Activated B cell treated with CpG ODN at 0.5 μM for 24 hours (primary cell): ENCODE measurements at regions of chr12 and their contacts with region 1.

Region 1: DNA sequence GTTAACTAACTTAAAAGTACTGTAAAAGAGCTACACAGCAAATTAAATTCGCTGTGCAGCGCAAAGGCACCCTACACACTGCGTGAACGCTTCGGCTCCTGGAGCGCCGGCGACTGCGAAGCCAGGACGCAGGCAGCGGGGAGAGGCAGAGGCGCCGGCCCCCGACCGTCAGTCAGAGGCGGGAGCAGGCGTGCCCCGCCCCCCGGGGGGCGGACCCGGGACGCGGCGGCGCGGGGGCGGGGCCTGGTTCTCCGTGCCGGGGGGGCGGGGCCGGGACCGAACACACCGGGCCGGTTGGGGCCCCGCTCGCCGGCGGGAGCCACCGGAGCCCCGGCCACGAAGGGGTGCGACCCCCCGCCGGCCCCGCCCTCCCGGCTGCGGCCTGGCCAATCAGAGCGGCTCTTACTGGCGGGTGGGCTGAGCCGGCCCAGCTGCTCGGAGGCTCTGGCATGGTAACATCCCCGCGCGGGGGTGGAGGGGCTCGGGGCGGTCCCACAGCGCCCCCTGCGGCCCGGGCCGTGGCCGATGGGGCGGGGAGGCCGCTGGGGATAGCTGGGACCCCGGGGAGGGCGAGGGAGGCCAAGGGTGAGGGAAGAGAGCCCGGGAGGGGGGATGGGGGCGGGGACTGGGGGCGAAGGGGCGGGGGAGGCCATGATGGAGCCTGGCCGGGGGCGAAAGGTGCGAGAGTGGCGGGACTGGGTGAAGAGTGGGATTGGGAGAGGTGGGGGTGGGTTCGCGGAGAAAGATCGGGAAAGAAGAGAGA is at the start of gene PRPF40B:
- DNase-seq: peak; percentile 89
- ATAC-seq: peak; percentile 79
- H3K4me3 Mint-ChIP-seq: peak within 1 kb of the TSS; percentile 88
- H3K27ac Mint-ChIP-seq: peak within 1 kb of the TSS; percentile 86
- H3K4me1 Mint-ChIP-seq: peaks cover 25% of the 10 kb centered on the region
- H3K27me3 Mint-ChIP-seq: no peaks in the 10 kb centered on the region
- CTCF ChIP-seq: no peak
- total RNA-seq, gene PRPF40B: 16.4 and 23.4 TPM in 2 replicates

Region 2: GRCh38 chr12:49342066-49342913 is 281.0 kb before region 1 on chr12:
- CTCF ChIA-PET with region 1: no interaction called
- POLR2A ChIA-PET with region 1: no interaction called
- intact Hi-C with region 1: loop called (anchors 5 kb)
- DNase-seq: peak; percentile 71
- ATAC-seq: peak; percentile 75
- H3K4me3 Mint-ChIP-seq: peak overlapping the region; percentile 67
- H3K27ac Mint-ChIP-seq: no peak overlapping the region
- H3K4me1 Mint-ChIP-seq: peaks cover 53% of the 10 kb centered on the region
- H3K27me3 Mint-ChIP-seq: peaks cover 39% of the 10 kb centered on the region
- CTCF ChIP-seq: peak; percentile 24

Region 3: GRCh38 chr12:49553512-49554088 is 69.7 kb before region 1 on chr12:
- CTCF ChIA-PET with region 1: interaction called, 3 read pairs
- POLR2A ChIA-PET with region 1: no interaction called
- intact Hi-C with region 1: loop called (anchors 1 kb)
- DNase-seq: no peak
- ATAC-seq: peak; percentile 65
- H3K4me3 Mint-ChIP-seq: no peak overlapping the region
- H3K27ac Mint-ChIP-seq: no peak overlapping the region
- H3K4me1 Mint-ChIP-seq: peaks cover 4% of the 10 kb centered on the region
- H3K27me3 Mint-ChIP-seq: peaks cover 13% of the 10 kb centered on the region
- CTCF ChIP-seq: no peak

Region 4: DNA sequence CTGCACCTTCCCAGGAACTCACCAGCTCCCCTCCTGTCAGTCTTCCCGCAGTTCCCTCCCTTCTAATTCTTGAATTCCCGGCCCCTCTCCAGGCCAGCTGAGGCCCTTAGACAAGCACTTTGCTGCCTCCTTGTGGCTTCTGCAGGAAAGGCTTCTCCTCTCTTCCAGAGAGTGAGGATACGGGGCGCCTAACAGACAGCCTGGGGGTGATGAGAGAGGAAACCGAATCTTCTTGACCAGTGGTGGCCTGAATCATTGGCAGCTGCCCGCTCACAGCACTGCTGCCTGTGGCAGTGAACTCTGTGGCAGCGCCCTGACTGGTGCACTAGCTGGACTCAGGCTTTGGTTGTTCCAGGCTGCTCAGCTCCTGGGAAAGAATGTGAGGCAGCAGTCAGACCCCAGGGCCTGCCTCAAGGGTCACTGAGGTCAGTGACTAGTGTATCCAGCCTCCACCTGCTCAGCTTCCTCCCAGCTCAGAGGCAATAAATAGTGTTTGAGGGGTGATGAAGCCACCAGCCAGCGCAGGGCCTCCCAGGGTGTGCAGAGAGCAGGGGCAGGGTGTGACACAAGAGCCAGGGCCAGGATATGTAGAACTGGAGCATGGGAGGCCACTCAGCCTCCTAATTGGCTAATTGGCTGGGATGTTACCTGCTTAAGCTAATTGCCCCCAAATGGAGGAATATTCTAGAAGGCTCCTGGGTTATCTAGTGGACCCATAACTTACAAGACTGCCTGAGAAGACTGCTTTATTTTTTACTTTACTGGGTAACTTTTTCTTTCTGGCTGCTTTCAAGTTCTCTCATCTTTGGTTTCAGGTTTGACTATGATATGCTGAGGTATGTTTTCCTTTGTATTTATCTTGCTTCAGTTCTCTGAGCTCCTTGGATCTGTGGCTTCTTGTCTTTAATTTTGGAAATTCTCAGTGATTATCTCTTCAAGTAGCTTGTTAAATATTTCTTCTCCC is 42.5 kb before region 1 on chr12:
- CTCF ChIA-PET with region 1: interaction called, 3 read pairs
- POLR2A ChIA-PET with region 1: interaction called, 3 read pairs
- intact Hi-C with region 1: loop called (anchors 5 kb)
- DNase-seq: no peak
- ATAC-seq: peak; percentile 62
- H3K4me3 Mint-ChIP-seq: no peak overlapping the region
- H3K27ac Mint-ChIP-seq: no peak overlapping the region
- H3K4me1 Mint-ChIP-seq: peaks cover 11% of the 10 kb centered on the region
- H3K27me3 Mint-ChIP-seq: no peaks in the 10 kb centered on the region
- CTCF ChIP-seq: no peak

Region 5: DNA sequence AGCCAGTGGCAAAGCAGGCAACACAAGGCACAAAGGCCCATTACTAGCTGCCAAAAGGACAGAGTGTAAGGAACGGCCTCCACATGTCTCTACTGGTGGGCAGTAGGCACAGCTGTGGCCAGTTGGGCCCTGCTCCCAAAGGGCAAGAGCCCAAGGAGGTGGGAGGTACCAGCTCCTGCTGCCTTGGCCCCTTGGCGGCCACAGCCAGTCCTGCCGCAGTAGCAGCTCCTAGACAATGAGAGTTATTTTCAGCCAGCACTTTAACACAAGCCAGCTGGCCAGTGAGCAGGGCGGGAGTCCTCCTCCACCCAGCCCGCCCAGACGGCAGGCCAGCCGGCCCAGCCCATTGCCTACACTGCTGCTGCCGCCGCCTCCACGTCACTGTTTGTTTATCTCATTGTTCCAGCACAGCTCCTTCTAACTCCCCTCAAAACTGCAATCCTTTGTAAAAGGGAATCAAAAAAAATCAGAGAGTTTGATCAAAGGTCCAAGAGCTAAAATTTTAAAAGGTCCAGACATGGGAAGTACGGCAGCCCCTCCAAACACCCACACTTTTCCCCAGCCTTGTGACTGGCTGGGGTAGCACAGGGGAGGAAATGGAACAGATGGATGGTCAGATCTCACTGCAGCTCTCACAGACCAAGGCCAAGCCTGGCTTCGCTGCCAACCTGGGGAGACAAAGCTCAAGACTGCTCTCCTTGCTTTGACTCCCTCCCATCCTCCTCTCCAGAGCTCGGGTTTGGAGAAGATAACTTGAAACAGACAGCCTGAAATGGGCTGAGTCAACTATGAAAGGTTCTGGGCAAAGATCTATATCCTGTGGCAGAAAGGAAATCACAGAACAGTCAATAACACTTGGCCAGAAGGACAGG is 50.4 kb after region 1 on chr12:
- CTCF ChIA-PET with region 1: no interaction called
- POLR2A ChIA-PET with region 1: interaction called, 12 read pairs
- intact Hi-C with region 1: no loop called
- DNase-seq: no peak
- ATAC-seq: no peak
- H3K4me3 Mint-ChIP-seq: peak overlapping the region; percentile 52
- H3K27ac Mint-ChIP-seq: peak overlapping the region; percentile 95
- H3K4me1 Mint-ChIP-seq: peaks cover 85% of the 10 kb centered on the region
- H3K27me3 Mint-ChIP-seq: no peaks in the 10 kb centered on the region
- CTCF ChIP-seq: no peak

Region 6: GRCh38 chr12:49842519-49843352 is 219.4 kb after region 1 on chr12 and contains the start of gene BCDIN3D:
- CTCF ChIA-PET with region 1: no interaction called
- POLR2A ChIA-PET with region 1: interaction called, 5 read pairs
- intact Hi-C with region 1: loop called (anchors 5 kb)
- DNase-seq: peak; percentile 88
- ATAC-seq: peak; percentile 90
- H3K4me3 Mint-ChIP-seq: peak within 1 kb of the TSS; percentile 93
- H3K27ac Mint-ChIP-seq: peak within 1 kb of the TSS; percentile 90
- H3K4me1 Mint-ChIP-seq: peaks cover 34% of the 10 kb centered on the region
- H3K27me3 Mint-ChIP-seq: no peaks in the 10 kb centered on the region
- CTCF ChIP-seq: no peak
- total RNA-seq, gene BCDIN3D: 10.4 and 12.0 TPM in 2 replicates